ENCODE measurements at regions of chr1 and their contacts with region 1.

Region 1: DNA sequence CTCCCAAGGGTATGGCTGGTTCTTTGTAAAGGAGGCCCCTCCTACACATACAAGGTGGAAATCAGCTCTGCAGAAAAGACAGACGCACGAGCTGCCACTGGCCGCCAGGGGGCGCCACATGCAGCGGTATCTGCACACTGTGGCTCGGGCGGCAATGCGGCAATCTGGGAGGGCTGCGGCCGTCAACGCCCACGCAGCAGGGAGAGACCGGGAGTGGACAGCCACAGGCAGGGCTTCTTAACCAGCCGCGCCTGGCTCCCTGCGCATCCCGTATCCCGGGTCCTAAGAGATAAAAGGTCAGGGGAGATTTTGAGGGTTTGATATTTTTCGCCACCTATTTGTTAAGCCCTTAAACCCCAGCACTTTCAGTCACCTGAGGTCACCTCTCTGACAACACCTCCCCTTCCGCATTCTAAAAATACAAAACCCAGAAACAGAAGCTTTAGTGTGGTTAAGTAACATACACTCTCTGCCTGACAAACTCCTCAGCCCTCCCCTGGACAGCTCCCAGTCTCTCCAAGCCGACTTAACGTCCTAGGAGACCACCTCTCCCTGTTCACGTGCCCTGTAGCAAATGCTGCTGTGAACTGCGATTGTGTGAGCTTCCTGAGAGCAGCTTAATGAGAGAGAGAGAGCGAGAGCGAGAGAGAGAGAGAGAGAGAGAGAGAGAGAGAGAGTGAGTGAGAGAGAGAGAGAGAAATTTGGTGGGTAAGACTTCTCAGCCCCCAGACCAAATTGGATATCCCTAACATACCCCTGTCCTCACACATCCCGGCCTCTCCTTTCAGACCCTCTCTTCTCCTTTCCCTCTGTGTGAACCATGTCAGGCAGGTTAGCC is 13.5 kb upstream of the KCNA2 start:
- DNase-seq: peak; percentile 87
- ATAC-seq: peak; percentile 88

Region 2: GRCh38 chr1:109687616-109688499 is 931.8 kb before region 1 on chr1 and contains the start of gene GSTM1:
- intact Hi-C with region 1: no loop called
- DNase-seq: peak; percentile 93
- ATAC-seq: no peak
- total RNA-seq, gene GSTM1: 91.5 TPM

Region 3: GRCh38 chr1:110524311-110525251 is 95.0 kb before region 1 on chr1:
- intact Hi-C with region 1: loop called (anchors 5 kb)
- DNase-seq: peak; percentile 65
- ATAC-seq: peak; percentile 75

Region 4: DNA sequence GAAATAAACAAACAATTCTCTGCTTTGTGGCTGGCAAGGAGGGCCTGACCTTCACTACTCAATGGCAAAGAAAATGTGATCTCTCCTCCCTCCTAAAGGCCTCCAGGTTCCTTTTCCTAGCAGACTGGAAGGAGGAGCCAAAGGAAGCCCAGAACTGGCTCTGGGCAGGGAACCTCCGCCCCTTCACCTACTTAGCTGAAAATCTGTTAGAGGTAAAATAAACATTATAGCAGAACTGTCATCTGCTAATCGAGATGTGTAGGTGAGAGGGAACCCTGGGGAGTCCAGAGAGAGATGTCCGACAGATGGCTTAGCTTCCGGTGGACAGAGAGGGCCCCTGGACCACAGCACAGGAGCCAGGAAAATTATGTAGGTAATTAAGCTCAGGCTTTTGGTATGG is 130.3 kb after region 1 on chr1:
- intact Hi-C with region 1: no loop called
- DNase-seq: no peak
- ATAC-seq: no peak

Region 5: DNA sequence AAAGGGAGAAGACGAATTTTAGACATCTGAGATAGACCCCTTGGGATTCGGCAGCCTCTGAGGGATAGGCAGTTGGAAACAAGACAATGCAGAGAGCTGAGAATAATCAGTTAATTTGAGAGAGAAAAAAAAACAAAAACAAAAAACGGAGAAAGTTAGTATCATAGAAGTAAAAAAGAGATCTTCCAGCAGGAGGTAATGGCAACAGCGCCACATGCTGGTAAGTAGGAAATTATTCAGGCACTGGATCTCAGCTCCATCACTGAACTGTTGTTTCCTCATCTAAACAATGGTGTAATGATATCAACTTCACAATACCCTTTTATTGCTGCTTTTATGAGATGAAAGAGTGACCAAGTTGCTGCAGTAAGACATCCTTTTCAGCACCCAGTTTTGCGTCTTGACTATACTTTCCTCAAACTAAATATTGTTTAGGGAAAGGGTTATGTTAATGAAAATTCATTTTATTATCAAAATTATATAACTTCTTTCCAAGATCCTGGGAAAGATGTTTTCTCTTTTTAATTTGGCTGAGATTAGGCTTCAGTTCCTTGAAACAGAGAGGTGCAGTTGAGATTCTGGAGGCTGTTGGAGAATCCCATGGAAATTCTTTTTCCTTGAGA is 146.5 kb after region 1 on chr1:
- intact Hi-C with region 1: loop called (anchors 10 kb)
- DNase-seq: no peak
- ATAC-seq: no peak